ENCODE measurements at regions of chr18 and their contacts with region 1.

Region 1: DNA sequence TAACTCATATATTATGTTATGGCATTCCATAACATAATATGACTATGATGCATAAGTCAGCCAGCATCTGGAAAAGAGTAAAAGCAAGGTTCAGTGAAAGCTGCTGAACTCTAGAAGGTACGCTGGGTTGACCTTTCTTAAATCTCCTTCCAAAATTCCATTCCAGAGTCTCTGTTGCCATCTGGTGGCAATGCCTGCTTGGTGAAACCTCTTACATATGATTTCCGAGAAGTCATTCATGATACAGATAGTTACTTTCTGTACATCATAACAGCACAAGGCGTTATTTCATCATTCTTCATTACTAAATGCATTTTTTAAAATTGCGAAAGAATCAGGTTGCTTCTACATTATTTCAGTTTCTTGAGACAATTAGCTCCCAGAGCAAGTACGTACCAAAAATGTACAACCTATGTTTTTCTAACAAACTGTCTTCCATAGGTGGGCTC is 7.0 kb upstream of the EPG5 start:
- DNase-seq: no peak
- H3K4me3 ChIP-seq: no peak overlapping the region
- H3K27me3 ChIP-seq: no peaks in the 10 kb centered on the region
- CTCF ChIP-seq: peak; percentile 81

Region 2: DNA sequence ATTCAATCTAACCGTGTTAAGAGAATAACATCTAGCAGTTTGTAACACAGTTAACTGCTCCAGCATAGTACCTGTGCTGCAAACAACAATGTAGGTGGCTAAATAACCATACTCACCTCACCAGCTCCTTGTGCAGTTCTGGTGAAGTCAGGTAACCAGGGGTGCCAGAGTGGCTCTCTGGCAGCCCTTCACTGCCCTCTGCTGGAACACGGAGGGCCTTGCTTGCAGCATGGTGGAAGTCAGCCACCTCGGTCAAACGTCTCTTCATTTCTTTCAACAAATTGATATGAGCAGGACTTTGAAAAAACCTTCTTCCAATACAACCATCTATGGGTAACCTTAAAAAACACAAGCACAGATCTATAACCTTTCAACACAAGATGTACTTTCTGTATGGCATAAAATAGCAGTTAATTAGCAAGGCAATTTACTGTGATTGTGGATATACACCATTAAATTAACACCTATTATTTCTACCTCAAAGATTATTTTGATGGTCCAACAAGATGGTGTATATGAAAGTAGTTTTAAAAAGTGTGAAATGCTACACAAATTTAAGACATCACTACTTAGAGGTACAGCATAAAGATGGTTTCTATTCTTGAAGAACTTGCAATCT is 63.6 kb before region 1 on chr18:
- CTCF ChIA-PET with region 1: interaction called, 12 read pairs
- POLR2A ChIA-PET with region 1: no interaction called
- DNase-seq: no peak
- H3K4me3 ChIP-seq: no peak overlapping the region
- H3K27me3 ChIP-seq: no peaks in the 10 kb centered on the region
- CTCF ChIP-seq: peak; percentile 88

Region 3: DNA sequence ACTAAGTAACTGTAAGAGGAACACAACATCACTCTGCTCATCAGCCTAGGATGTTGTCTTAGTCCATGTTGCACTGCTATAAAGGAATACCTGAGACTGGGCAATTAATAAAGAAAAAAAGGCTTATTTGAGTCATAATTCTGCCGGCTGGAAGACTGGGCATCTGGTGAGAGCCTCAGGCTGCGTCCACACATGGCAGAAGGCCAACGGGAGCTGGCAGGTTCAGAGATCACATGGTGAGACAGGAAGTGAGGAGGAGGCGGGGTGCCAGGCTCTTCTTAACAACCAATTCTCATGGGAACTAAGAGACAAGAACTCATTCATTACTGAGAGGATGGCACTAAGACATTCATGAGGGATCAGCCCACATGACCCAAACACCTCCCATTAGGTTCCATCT is 53.7 kb before region 1 on chr18:
- CTCF ChIA-PET with region 1: interaction called, 13 read pairs
- POLR2A ChIA-PET with region 1: no interaction called
- DNase-seq: peak; percentile 41
- H3K4me3 ChIP-seq: no peak overlapping the region
- H3K27me3 ChIP-seq: no peaks in the 10 kb centered on the region
- CTCF ChIP-seq: no peak

Region 4: GRCh38 chr18:46013484-46014189 is 39.5 kb after region 1 on chr18:
- CTCF ChIA-PET with region 1: no interaction called
- POLR2A ChIA-PET with region 1: no interaction called
- DNase-seq: no peak
- H3K4me3 ChIP-seq: no peak overlapping the region
- H3K27me3 ChIP-seq: no peaks in the 10 kb centered on the region
- CTCF ChIP-seq: no peak

Region 5: GRCh38 chr18:46073474-46074331 is 99.6 kb after region 1 on chr18:
- CTCF ChIA-PET with region 1: interaction called, 46 read pairs
- POLR2A ChIA-PET with region 1: no interaction called
- DNase-seq: no peak
- H3K4me3 ChIP-seq: no peak overlapping the region
- H3K27me3 ChIP-seq: no peaks in the 10 kb centered on the region
- CTCF ChIP-seq: peak; percentile 54

Measured in BJ (cell line).